Pancreas (tissue), 10 donors: ENCODE measurements at regions of chr12 and their contacts with region 1.

Region 1: DNA sequence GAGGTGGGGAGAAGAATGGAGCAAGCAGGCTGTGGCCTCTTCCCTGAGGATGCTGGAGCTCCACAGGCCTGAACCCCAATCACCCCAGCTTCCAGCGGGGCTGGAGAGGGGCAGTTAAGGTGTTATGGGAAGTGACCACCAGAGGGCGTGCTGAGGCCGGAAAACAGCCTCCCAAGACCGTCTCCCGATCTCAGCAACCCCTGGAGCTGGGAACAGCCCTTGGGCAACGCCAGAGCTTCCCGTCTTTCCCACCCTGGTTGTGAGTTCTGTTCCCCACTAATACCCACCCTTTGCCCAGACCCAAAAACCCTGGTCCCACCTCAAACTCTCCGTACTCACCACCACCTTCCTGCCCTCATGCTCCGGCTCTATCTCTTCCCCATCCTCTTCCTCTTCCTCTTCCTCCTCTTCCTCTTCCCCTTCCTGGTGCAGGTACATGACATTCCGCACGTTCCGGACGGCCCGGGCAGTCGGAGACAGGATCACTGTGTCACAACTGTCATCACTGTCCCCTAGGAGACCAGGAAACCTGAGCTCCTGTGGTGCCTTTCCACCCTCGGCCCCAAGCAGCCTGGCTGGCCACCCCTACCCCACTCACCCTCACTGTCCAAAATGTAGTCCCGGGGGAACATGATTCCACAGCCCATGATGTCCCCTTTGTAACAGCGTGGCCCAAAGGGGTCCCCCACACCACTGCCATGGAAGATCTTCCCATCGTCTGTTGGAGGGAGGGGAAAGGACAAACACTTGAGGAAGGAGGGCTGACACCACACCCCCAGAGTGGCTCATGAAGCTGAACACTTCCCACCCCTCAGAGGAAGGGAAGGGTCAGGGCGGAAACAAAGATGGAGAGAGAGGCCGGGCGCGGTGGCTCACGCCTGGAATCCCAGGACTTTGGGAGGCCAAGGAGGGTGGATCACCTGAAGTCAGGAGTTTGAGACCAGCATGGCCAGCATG is 12.9 kb downstream of the SPRYD3 start:
- DNase-seq: peak; percentile 64 to 89 (median 80)
- ATAC-seq: peak; percentile 45 to 65 (median 56)
- H3K4me3 ChIP-seq: no peak overlapping the region
- H3K27ac ChIP-seq: peak overlapping the region in 1 of 4 donors; percentile 28
- H3K4me1 ChIP-seq: peaks cover 11 to 14% (median 13%) of the 10 kb centered on the region in 3 donors
- H3K27me3 ChIP-seq: no peaks in the 10 kb centered on the region
- CTCF ChIP-seq: peak; percentile 86 to 91 (median 88)

Region 2: DNA sequence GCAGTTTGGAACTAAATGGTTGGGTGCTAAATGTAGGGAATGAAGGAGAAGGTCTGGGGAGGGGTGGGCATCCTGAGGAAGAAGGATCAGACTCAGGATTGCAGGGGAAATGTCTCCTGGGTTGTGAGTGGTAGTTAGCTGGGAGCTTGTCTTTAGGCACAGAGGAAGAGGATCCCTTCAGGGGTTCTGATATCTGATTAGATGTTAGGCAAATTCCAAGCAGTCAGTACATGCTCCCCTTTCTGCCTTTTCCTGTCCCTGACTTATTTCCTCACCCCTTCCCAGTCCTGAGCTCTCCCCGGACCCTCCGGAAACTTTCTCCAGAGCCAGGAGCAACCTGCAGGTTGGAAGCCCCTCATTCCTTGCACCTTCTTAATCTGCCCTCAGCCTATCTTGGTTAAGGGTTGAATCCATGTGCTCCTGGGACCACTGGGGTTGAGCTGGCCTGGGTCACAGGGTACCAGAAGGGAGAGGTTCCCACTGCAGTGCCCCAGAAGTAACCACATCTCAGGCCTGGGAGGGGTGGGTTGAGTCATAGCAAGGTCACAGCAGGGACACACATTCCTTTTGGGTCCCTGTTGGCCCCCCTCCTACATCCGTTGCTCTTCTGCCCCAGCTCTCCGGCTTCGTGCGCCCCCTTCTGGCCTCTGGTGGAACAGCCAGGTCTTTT is 32.9 kb after region 1 on chr12:
- intact Hi-C with region 1: loop called in 2 of 3 experiments (anchors 2 to 5 kb)
- DNase-seq: peak; percentile 78 to 97 (median 88)
- ATAC-seq: peak; percentile 55 to 70 (median 63)
- H3K4me3 ChIP-seq: no peak overlapping the region
- H3K27ac ChIP-seq: peak overlapping the region in 3 of 4 donors; percentile 19 to 66 (median 29)
- H3K4me1 ChIP-seq: peaks cover 6 to 24% (median 14%) of the 10 kb centered on the region in 3 donors
- H3K27me3 ChIP-seq: no peaks in the 10 kb centered on the region
- CTCF ChIP-seq: peak; percentile 82 to 97 (median 88)

Region 3: GRCh38 chr12:53190108-53190729 is 124.0 kb after region 1 on chr12:
- intact Hi-C with region 1: loop called in 2 of 3 experiments (anchors 10 kb)
- DNase-seq: peak in 4 of 6 donors; percentile 56 to 76 (median 71)
- ATAC-seq: peak; percentile 72 to 90 (median 88)
- H3K4me3 ChIP-seq: no peak overlapping the region
- H3K27ac ChIP-seq: no peak overlapping the region
- H3K4me1 ChIP-seq: no peaks in the 10 kb centered on the region
- H3K27me3 ChIP-seq: no peaks in the 10 kb centered on the region
- CTCF ChIP-seq: peak; percentile 48 to 64 (median 52)